GM12878 (cell line): ENCODE measurements at regions of chr18 and their contacts with region 1.

Region 1: GRCh38 chr18:58615140-58616132 is 13.5 kb downstream of the ALPK2 start:
- DNase-seq: peak; percentile 88
- ATAC-seq: peak; percentile 92
- H3K4me3 ChIP-seq: no peak overlapping the region; the same call in 1 of the 2 replicates
- H3K27ac ChIP-seq: peak overlapping the region; percentile 70
- H3K4me1 ChIP-seq: peaks cover 22% of the 10 kb centered on the region
- H3K27me3 ChIP-seq: no peaks in the 10 kb centered on the region
- CTCF ChIP-seq: no peak
- EP300 ChIP-seq: peak; percentile 54 to 74; a peak in 3 of 4 replicates
- POLR2A ChIP-seq: no peak
- RAD21 ChIP-seq: peak; percentile 21; the same call in 1 of the 2 replicates

Region 2: GRCh38 chr18:58562146-58562998 is 53.1 kb before region 1 on chr18:
- CTCF ChIA-PET with region 1: interaction called, 6 read pairs
- POLR2A ChIA-PET with region 1: interaction called, 3 read pairs
- RAD21 ChIA-PET with region 1: interaction called, 11 read pairs
- SMC1A ChIA-PET with region 1: interaction called, 16 read pairs
- in situ Hi-C with region 1: no loop called
- intact Hi-C with region 1: loop called (anchors 1 kb)
- DNase-seq: no peak
- ATAC-seq: peak; percentile 57
- H3K4me3 ChIP-seq: no peak overlapping the region
- H3K27ac ChIP-seq: peak overlapping the region; percentile 83
- H3K4me1 ChIP-seq: peaks cover 60% of the 10 kb centered on the region
- H3K27me3 ChIP-seq: no peaks in the 10 kb centered on the region
- CTCF ChIP-seq: no peak
- EP300 ChIP-seq: no peak
- POLR2A ChIP-seq: peak; percentile 35; the same call in 1 of the 2 replicates
- RAD21 ChIP-seq: no peak

Region 3: DNA sequence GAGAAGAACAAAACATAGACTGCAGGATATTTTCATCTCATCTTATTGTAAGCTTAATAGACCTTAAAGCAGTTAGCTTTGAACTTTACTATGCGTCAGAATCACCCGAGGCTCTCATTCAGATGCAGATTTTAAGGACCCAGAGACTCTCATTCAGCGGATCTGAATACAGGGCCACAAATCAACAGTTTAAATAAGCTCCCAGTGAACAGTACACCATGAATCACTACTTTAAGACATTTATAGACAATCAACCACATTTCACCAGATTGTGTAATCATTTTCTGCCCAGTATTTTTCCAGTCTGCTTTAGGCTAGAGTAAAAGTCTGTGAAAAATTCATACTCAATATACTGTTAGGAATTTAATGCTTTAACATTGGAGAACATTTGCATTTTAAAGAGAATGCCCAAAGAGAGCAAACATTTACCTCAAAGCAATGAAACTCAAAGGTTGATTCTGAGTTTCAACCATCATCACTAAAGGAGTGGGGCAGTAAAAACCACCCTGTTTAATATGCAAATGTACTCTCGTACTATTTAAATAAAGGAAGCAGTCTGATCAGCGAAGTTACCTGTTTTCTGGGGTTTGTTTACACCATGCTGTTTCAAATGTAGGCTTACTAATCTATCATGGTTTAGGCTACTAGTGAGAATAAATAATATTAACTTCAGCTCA is 24.5 kb after region 1 on chr18:
- CTCF ChIA-PET with region 1: interaction called, 3 read pairs
- POLR2A ChIA-PET with region 1: interaction called, 6 read pairs
- RAD21 ChIA-PET with region 1: interaction called, 5 read pairs
- SMC1A ChIA-PET with region 1: interaction called, 5 read pairs
- in situ Hi-C with region 1: no loop called
- intact Hi-C with region 1: loop called (anchors 1 kb)
- DNase-seq: no peak
- ATAC-seq: peak; percentile 69
- H3K4me3 ChIP-seq: no peak overlapping the region
- H3K27ac ChIP-seq: no peak overlapping the region; the same call in 1 of the 2 replicates
- H3K4me1 ChIP-seq: peaks cover 42% of the 10 kb centered on the region
- H3K27me3 ChIP-seq: no peaks in the 10 kb centered on the region
- CTCF ChIP-seq: no peak
- EP300 ChIP-seq: no peak
- POLR2A ChIP-seq: no peak
- RAD21 ChIP-seq: no peak

Region 4: GRCh38 chr18:58661423-58661822 is 46.0 kb after region 1 on chr18:
- CTCF ChIA-PET with region 1: interaction called, 5 read pairs
- POLR2A ChIA-PET with region 1: interaction called, 14 read pairs
- RAD21 ChIA-PET with region 1: interaction called, 12 read pairs
- SMC1A ChIA-PET with region 1: interaction called, 14 read pairs
- in situ Hi-C with region 1: no loop called
- intact Hi-C with region 1: loop called (anchors 2 kb)
- DNase-seq: no peak
- ATAC-seq: no peak
- H3K4me3 ChIP-seq: peak overlapping the region; percentile 28; the same call in 1 of the 2 replicates
- H3K27ac ChIP-seq: peak overlapping the region; percentile 45; the same call in 1 of the 2 replicates
- H3K4me1 ChIP-seq: peaks cover 36% of the 10 kb centered on the region
- H3K27me3 ChIP-seq: no peaks in the 10 kb centered on the region
- CTCF ChIP-seq: peak; percentile 4 to 36 (median 20); a peak in 4 of 6 replicates
- EP300 ChIP-seq: no peak
- POLR2A ChIP-seq: no peak
- RAD21 ChIP-seq: peak; percentile 25; the same call in 1 of the 2 replicates

Region 5: GRCh38 chr18:58781627-58782194 is 166.3 kb after region 1 on chr18:
- CTCF ChIA-PET with region 1: no interaction called
- POLR2A ChIA-PET with region 1: no interaction called
- RAD21 ChIA-PET with region 1: no interaction called
- SMC1A ChIA-PET with region 1: no interaction called
- in situ Hi-C with region 1: no loop called
- intact Hi-C with region 1: no loop called
- DNase-seq: peak; percentile 57
- ATAC-seq: peak; percentile 99
- H3K4me3 ChIP-seq: no peak overlapping the region
- H3K27ac ChIP-seq: no peak overlapping the region
- H3K4me1 ChIP-seq: no peaks in the 10 kb centered on the region
- H3K27me3 ChIP-seq: no peaks in the 10 kb centered on the region
- CTCF ChIP-seq: peak; percentile 80 to 91 (median 83)
- EP300 ChIP-seq: no peak
- POLR2A ChIP-seq: no peak
- RAD21 ChIP-seq: peak; percentile 93

Region 6: DNA sequence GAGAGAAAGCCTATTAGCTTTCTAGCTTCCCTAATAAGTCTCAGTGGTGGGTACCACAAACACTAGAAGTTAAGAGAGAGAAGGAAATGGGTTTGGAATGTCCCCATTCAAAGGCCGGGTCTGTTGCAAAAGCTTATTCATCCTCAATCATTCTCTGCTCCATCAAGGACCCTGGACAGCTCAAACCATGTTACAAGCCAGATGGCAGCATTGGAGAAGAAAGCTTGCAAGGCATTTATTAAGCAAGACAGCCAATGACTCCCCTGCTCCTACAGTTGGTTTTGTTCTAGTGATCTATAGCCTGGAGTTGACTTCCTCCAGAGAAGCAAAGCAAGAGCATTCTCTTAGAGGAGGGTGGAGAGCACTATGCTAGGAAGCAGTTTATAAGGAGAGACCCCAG is 830.6 kb after region 1 on chr18:
- CTCF ChIA-PET with region 1: no interaction called
- POLR2A ChIA-PET with region 1: no interaction called
- RAD21 ChIA-PET with region 1: no interaction called
- SMC1A ChIA-PET with region 1: no interaction called
- in situ Hi-C with region 1: no loop called
- intact Hi-C with region 1: no loop called
- DNase-seq: no peak
- ATAC-seq: no peak
- H3K4me3 ChIP-seq: no peak overlapping the region
- H3K27ac ChIP-seq: no peak overlapping the region
- H3K4me1 ChIP-seq: no peaks in the 10 kb centered on the region
- H3K27me3 ChIP-seq: no peaks in the 10 kb centered on the region
- CTCF ChIP-seq: no peak
- EP300 ChIP-seq: no peak
- POLR2A ChIP-seq: no peak
- RAD21 ChIP-seq: no peak